Heart left ventricle (tissue), 16 donors: ENCODE measurements at regions of chr15 and their contacts with region 1.

Region 1: GRCh38 chr15:23648920-23649515 is 1.4 kb upstream of the MAGEL2 start:
- DNase-seq: no peak
- ATAC-seq: peak in 2 of 4 donors; percentile 47
- H3K4me3 ChIP-seq: no peak overlapping the region
- H3K27ac ChIP-seq: no peak overlapping the region
- H3K4me1 ChIP-seq: peaks cover 0 to 8% (median 0%) of the 10 kb centered on the region in 12 donors
- H3K27me3 ChIP-seq: peaks cover 0 to 34% (median 10%) of the 10 kb centered on the region in 9 donors
- CTCF ChIP-seq: peak; percentile 33 to 62 (median 47)
- POLR2A ChIP-seq: no peak

Region 2: GRCh38 chr15:23595368-23595767 is 53.6 kb before region 1 on chr15:
- intact Hi-C with region 1: no loop called
- DNase-seq: no peak
- ATAC-seq: no peak
- H3K4me3 ChIP-seq: no peak overlapping the region
- H3K27ac ChIP-seq: no peak overlapping the region
- H3K4me1 ChIP-seq: no peaks in the 10 kb centered on the region
- H3K27me3 ChIP-seq: peaks cover 0 to 6% (median 0%) of the 10 kb centered on the region in 9 donors
- CTCF ChIP-seq: no peak
- POLR2A ChIP-seq: no peak

Region 3: DNA sequence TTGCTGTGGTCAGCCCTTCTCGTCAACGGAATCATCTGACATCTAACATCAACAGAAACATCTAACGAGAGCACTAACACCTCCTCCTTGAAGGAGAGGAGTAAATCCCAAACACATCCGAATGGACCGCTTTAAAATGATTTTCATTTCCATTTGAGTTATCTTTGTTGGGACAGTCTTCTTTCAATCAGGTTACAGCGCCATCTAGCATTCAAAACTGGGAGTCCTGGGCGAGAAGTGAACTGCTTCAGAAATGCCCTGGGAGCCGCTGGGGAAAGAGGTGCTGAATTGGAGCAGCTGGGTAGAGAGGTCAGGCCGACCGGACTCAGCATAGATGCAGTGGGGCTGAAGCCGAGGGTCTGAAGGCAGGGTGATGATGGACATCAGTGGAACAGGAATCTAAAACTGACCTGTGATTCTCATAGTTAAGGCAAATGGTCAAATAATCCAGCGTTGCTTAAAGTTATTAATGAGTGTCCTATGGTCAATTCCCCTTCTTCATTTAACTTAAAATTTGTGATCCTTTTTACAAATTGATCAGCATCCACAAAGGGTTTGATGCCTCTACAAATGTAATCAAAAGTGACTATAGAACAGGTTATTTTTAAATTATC is 208.1 kb after region 1 on chr15:
- intact Hi-C with region 1: loop called in 6 of 10 experiments (anchors 5 to 10 kb)
- DNase-seq: peak in 2 of 5 donors; percentile 16 to 27
- ATAC-seq: no peak
- H3K4me3 ChIP-seq: no peak overlapping the region
- H3K27ac ChIP-seq: no peak overlapping the region
- H3K4me1 ChIP-seq: no peaks in the 10 kb centered on the region
- H3K27me3 ChIP-seq: peaks cover 0 to 4% (median 0%) of the 10 kb centered on the region in 9 donors
- CTCF ChIP-seq: peak in 9 of 12 donors; percentile 6 to 53 (median 24)
- POLR2A ChIP-seq: no peak

Region 4: GRCh38 chr15:23866832-23867231 is 217.8 kb after region 1 on chr15:
- intact Hi-C with region 1: loop called in 4 of 10 experiments (anchors 5 kb)
- DNase-seq: no peak
- ATAC-seq: no peak
- H3K4me3 ChIP-seq: no peak overlapping the region
- H3K27ac ChIP-seq: no peak overlapping the region
- H3K4me1 ChIP-seq: no peaks in the 10 kb centered on the region
- H3K27me3 ChIP-seq: peaks cover 0 to 11% (median 3%) of the 10 kb centered on the region in 9 donors
- CTCF ChIP-seq: peak in 5 of 12 donors; percentile 11 to 38 (median 29)
- POLR2A ChIP-seq: no peak

Region 5: GRCh38 chr15:23877502-23878412 is 228.7 kb after region 1 on chr15:
- intact Hi-C with region 1: loop called in 7 of 10 experiments (anchors 5 kb)
- DNase-seq: peak in 3 of 5 donors; percentile 23 to 42 (median 34)
- ATAC-seq: peak; percentile 32 to 82 (median 64)
- H3K4me3 ChIP-seq: no peak overlapping the region
- H3K27ac ChIP-seq: no peak overlapping the region
- H3K4me1 ChIP-seq: no peaks in the 10 kb centered on the region
- H3K27me3 ChIP-seq: peaks cover 0 to 7% (median 0%) of the 10 kb centered on the region in 9 donors
- CTCF ChIP-seq: peak; percentile 38 to 62 (median 48)
- POLR2A ChIP-seq: no peak

Region 6: DNA sequence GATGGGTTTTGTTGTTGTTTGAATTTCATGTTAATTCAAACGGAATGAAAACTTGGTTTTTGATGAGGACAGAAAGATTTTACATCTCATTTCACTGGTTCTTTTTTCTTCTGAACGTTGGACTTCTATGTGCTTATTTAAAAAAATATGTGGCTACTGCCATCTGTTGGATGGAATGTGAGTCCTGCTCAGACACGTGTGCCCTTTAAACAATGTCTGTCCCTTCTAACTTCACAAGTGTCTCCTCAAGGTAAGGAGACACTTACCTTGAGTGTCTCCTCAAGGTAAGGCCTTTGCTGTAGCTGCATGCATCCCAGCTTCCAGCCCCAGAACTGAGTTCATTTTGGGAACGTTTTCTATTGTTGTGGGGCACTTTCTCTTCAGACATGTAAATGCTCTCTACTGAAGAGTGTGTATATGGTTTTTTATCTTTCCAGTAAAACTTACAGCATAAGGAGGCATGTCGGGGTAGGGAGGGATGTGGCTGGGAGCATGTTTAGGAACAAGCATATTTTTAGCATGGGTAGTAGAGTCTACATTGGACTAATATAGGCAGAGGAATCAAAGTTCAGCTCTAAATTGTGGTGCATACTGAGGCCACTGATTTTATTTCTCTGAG is 1852.9 kb after region 1 on chr15:
- intact Hi-C with region 1: loop called in 5 of 10 experiments (anchors 5 to 10 kb)
- DNase-seq: no peak
- ATAC-seq: peak in 2 of 4 donors; percentile 41 to 50
- H3K4me3 ChIP-seq: no peak overlapping the region
- H3K27ac ChIP-seq: no peak overlapping the region
- H3K4me1 ChIP-seq: peaks cover 0 to 2% (median 0%) of the 10 kb centered on the region in 12 donors
- H3K27me3 ChIP-seq: no peaks in the 10 kb centered on the region
- CTCF ChIP-seq: peak; percentile 45 to 76 (median 68)
- POLR2A ChIP-seq: no peak